GM10248 (cell line): ENCODE measurements at regions of chr9 and their contacts with region 1.

Region 1: DNA sequence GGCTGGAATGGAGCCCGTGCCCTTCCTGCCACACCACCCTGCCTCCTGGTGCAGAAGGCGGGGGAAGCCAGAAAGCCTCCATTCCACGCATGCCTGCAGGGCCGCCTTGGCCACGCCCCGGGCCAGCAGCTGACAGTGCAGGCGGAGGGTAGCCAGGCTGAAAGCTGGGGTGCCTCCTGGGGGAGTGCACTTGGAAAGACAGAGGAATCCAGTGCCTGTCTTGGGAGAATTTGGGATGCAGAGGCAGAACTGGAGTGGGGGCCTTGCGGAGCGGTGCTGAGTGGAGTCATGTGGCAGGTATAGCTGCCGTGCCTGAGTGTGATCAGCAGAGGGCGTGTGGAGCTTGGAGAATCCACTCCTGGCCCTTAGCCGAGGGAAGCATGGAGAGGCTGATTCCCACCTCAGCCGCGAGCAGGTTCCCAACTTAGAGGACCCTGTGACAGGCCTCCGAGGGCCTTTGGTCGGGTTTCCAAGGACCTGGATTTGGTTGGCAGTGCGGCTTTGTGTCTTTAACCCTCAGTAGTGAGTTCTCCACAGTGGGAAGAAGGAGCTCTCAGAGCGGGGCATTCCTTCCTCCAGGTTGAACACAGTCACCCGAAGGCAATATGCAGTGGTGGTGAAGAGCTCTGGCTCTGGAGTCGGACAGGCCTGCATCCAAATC is 9.1 kb upstream of the URM1 start:
- DNase-seq: peak; percentile 85
- CTCF ChIP-seq: peak; percentile 95

Region 2: GRCh38 chr9:128323212-128323730 is 38.8 kb before region 1 on chr9:
- CTCF ChIA-PET with region 1: interaction called, 10 read pairs
- POLR2A ChIA-PET with region 1: no interaction called
- DNase-seq: no peak
- CTCF ChIP-seq: no peak

Region 3: DNA sequence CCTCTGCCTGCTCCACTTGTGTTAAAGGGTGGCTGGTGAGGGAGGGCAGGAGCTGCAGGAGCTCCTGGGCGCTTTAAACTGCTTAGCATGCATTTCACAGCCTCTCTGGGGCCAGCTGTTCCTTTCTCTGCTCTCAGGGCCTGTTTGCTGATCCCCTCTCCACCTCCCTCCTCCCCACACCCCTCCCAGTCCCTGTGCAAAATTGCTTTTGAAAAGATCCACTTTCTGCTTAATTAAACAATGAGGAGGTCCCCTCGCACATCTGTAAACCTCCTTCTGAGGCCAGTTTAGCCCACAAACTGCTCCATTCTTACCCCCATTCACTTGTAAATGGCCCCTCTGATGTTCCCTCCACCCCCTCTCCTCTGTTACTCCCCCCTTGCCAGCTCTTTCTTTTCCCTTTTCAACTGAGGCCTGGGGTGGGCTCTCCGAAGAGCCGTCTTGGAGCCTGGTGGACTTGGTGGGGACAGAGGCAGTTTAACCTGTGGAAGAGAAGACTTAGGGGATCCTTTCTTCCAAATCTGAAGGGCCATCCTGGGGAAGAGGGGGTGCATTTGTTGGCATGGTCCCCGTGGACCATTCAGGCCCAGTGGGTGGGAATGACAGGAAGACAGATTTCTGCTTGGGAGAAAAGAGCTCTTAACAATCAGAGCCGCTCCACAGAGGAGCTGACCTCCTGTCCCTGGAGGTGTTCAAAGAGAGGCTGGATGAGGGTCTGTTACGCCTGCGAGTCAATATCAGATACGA is 21.1 kb after region 1 on chr9:
- CTCF ChIA-PET with region 1: interaction called, 21 read pairs
- POLR2A ChIA-PET with region 1: no interaction called
- DNase-seq: no peak
- CTCF ChIP-seq: no peak

Region 4: DNA sequence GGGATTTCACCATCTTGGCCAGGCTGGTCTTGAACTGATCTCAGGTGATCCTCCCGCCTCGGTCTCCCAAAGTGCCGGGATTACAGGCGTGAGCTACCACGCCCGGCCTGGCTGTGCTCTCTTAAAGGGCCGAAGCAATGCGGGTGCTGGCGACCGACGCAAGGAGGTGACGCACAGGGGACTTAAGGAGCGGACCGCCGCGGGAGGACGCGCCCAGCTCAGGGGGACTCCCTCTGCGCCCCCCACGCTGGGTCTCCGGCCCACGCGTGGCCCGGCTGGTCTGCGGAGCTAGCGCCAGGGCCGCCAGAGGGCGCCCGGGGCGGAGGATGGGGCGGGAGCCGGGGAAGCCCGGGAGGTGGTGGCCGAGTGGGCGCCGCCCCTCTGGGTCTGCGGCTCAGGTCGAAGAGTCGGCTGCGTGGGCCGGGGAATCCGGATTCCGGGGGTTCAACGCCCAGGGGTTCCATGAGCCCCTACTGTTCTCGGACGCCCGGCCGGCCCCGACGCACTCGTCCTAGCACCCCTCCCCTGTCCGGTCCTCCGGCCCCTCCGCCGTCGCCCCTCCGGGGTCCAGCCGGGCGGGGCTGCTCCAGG is 58.0 kb after region 1 on chr9:
- CTCF ChIA-PET with region 1: interaction called, 59 read pairs
- POLR2A ChIA-PET with region 1: no interaction called
- DNase-seq: peak; percentile 93
- CTCF ChIP-seq: peak; percentile 82